Activated T-helper 1 cell treated with anti-CD3 and anti-CD28 coated beads, Interleukin-12 subunit alpha, Interleukin-12 subunit beta, Interleukin-2, Interleukin-4 antibody, amounts not matched to agents 30 ng/mL and 10 ng/mL and 1 ng/mL, durations not matched to agents 14 hours and 24 hours and 36 hours (primary cell): ENCODE measurements at regions of chr3 and their contacts with region 1.

Region 1: DNA sequence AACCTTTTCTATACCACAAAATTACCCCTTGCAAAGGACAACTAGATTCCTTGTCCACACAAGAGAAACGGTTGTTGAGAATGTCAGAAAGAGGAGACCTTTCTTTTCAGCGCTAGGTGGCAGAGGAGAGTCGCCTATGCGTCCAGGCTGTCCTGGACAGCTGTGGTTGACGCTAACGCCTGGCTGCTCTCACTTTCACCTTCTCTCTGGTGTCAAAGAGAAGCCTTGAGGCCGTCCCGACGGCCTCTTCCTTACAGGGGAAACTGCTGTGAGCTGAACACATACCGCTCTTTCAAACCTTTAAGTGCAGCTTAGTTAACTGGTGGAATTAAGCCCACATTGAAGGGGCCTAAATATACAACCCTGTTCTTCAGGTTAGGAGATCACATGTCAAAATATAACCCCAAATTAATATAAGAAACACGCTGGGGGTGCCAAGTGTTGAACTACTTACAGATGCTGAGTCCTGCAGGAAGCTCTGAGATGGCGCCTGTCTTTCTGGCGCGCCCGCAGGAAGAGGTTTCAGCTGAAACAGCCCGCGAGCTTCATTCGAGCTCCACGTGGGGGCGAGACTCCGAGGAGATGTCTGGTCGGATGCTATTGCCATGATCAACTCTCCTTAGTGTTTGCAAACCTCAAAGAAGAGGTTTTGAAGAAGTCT is 26.1 kb upstream of the KBTBD8 start:
- DNase-seq: peak; percentile 46
- H3K4me3 Mint-ChIP-seq: peak overlapping the region; percentile 68
- H3K27ac Mint-ChIP-seq: no peak overlapping the region
- H3K4me1 Mint-ChIP-seq: peaks cover 13% of the 10 kb centered on the region
- H3K27me3 Mint-ChIP-seq: peaks cover 24% of the 10 kb centered on the region

Region 2: DNA sequence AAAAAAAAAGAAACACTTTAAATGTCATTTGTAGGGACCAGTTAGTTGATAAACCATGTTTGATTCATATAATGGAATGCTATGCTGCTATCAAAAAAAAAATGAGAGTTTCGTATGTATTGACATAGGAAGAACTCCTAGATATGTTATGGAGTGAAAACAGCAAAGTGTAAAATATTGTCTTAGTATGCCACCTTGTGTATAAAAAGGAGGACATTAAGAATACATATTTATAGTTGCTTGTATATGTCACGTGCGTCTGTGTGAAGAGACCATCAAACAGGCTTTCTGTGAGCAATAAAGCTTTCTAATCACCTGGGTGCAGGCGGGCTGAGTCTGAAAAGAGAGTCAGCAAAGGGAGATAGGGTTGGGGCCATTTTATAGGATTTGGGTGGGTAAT is 65.6 kb after region 1 on chr3:
- intact Hi-C with region 1: loop called (anchors 1 kb)
- DNase-seq: no peak
- H3K4me3 Mint-ChIP-seq: no peak overlapping the region
- H3K27ac Mint-ChIP-seq: no peak overlapping the region
- H3K4me1 Mint-ChIP-seq: no peaks in the 10 kb centered on the region
- H3K27me3 Mint-ChIP-seq: peaks cover 5% of the 10 kb centered on the region

Region 3: DNA sequence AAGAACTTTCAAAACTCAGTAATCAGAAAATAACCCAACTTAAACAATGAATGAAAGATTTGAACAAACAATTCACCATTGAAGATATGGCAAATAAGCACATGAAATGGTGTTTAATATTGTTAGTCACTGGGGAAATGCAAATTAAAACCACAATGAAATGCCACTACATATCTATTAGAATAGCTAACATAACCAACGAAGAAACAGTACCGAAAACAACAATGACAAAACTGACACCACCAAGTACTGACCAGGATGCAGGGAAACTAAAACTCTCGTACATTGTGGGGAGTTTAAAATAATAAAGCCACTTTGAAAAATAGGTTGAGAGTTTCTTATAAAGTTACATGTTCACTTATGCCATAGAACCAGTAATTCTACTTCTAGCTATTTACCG is 95.2 kb after region 1 on chr3:
- intact Hi-C with region 1: no loop called
- DNase-seq: no peak
- H3K4me3 Mint-ChIP-seq: no peak overlapping the region
- H3K27ac Mint-ChIP-seq: no peak overlapping the region
- H3K4me1 Mint-ChIP-seq: no peaks in the 10 kb centered on the region
- H3K27me3 Mint-ChIP-seq: peaks cover 3% of the 10 kb centered on the region

Region 4: GRCh38 chr3:67077656-67078055 is 105.6 kb after region 1 on chr3:
- intact Hi-C with region 1: no loop called
- DNase-seq: no peak
- H3K4me3 Mint-ChIP-seq: no peak overlapping the region
- H3K27ac Mint-ChIP-seq: no peak overlapping the region
- H3K4me1 Mint-ChIP-seq: peaks cover 5% of the 10 kb centered on the region
- H3K27me3 Mint-ChIP-seq: no peaks in the 10 kb centered on the region

Region 5: DNA sequence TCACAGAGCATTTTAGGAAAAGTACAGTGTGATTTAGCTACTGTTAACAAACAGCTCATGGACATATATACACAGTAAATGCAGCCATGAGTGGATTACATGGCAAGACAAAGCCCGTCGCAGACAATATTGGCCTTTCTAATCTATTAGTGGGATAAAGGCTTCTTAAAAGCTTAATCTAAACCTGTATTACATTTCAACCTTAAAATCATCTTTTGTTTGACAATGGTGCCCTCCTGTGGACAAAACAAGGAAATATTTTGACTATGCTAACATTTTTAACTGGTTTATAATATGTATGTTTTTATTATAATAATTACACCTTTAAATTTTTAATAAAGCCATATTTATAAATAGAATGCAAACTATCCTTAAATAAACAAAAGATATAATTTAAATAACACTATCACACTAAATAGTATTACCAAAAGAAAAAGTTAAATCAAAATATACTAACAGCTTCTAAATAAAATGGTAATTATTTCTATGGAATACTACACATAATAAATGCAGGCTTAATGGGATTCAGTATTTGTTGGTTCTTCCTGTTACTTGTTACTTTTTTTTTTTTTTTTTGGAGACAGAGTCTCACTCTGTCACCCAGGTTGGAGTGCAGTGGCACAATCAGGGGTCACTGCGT is 1921.7 kb after region 1 on chr3:
- intact Hi-C with region 1: loop called (anchors 1 kb)
- DNase-seq: no peak
- H3K4me3 Mint-ChIP-seq: no peak overlapping the region
- H3K27ac Mint-ChIP-seq: no peak overlapping the region
- H3K4me1 Mint-ChIP-seq: no peaks in the 10 kb centered on the region
- H3K27me3 Mint-ChIP-seq: peaks cover 19% of the 10 kb centered on the region